Activated naive CD4-positive, alpha-beta T cell treated with anti-CD3 and anti-CD28 coated beads, Interleukin-2, amount 10 ng/mL, durations not matched to agents 7 days and 5 days (primary cell): ENCODE measurements at regions of chr11 and their contacts with region 1.

Region 1: DNA sequence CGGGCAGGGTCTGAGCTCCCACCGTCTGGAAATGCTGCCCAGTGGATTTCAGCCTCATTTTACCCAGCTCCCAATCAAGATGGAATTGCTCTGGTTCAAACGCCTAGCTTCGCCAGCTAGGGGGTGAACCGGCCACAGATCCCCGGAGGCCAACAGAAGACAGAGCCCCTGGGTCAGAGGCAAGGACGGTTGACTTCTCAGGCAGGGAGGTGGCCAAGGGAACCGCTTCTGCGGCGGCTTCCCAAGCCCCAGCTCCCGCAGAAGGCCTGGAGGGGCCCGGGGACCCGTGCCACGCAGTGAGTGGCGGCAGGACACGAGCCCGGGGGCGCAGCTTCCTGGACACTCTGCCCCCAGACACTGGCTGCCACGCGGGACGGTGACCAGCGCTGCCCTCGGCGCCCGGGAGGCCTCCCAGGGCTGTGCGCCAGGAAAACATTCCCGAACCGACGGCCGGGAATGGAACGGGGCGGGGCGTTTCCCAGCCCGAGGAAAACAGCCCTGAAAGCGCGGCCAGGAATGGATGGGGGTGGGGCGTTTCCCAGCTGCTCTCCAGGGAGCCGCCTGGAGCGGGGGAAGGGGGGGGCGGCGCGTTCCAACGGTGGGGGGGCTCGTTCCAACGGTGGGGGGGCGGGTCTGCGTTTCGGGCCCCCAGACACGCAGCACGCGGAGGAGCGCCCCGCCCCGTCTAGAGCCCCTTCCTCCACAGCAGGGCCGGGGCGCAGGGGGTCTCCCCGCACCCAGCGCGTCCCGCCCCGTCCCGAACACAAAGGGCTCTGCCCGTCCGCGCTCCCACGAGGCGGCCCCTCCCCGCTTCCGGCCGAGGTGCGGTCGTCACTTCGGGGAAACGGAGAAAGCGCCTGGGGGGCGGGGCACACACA is 13.5 kb upstream of the B4GALNT4 start:
- DNase-seq: peak; percentile 93
- H3K4me3 Mint-ChIP-seq: peak overlapping the region; percentile 80
- H3K27ac Mint-ChIP-seq: peak overlapping the region; percentile 94
- H3K4me1 Mint-ChIP-seq: peaks cover 41% of the 10 kb centered on the region
- H3K27me3 Mint-ChIP-seq: peaks cover 36% of the 10 kb centered on the region

Region 2: GRCh38 chr11:297586-298405 is 58.0 kb before region 1 on chr11:
- CTCF ChIA-PET with region 1: no interaction called
- DNase-seq: peak; percentile 60
- H3K4me3 Mint-ChIP-seq: no peak overlapping the region
- H3K27ac Mint-ChIP-seq: peak overlapping the region; percentile 33
- H3K4me1 Mint-ChIP-seq: peaks cover 27% of the 10 kb centered on the region
- H3K27me3 Mint-ChIP-seq: peaks cover 36% of the 10 kb centered on the region

Region 3: DNA sequence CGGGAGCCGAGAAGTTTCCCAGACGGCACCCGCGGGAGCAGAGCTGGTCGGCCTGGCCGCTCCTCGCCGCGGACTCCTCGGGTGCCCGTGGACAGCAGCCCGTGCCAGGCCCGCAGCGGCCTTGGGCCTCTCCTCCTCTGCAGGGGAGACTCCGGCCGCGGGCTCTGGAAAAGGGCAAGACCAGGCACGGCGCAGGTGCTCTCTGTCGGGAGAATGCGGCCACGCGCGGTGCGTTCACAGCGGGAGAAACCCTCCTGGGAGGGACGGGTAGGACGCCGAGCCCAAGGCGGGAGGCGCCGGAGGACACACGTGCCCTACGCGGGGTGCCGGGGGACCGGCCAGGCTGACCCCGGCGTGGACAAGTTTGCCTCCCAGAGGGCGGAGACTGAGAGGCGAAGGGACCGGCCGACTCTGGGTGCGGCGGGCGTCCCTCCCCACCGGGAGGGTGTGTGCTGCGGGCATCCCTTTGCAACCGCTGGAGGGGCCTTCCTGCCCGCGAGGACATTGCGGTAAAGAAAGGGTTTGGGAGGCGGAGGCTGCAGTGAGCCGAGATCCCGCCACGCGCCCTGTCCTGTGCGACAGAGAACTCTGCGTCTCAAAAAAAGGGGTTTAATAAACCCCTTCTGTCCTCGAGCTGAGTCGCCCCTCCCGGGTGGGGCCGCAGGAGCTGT is 39.7 kb before region 1 on chr11:
- CTCF ChIA-PET with region 1: interaction called, 15 read pairs
- DNase-seq: peak; percentile 65
- H3K4me3 Mint-ChIP-seq: peak overlapping the region; percentile 83
- H3K27ac Mint-ChIP-seq: peak overlapping the region; percentile 97
- H3K4me1 Mint-ChIP-seq: peaks cover 40% of the 10 kb centered on the region
- H3K27me3 Mint-ChIP-seq: peaks cover 12% of the 10 kb centered on the region

Region 4: DNA sequence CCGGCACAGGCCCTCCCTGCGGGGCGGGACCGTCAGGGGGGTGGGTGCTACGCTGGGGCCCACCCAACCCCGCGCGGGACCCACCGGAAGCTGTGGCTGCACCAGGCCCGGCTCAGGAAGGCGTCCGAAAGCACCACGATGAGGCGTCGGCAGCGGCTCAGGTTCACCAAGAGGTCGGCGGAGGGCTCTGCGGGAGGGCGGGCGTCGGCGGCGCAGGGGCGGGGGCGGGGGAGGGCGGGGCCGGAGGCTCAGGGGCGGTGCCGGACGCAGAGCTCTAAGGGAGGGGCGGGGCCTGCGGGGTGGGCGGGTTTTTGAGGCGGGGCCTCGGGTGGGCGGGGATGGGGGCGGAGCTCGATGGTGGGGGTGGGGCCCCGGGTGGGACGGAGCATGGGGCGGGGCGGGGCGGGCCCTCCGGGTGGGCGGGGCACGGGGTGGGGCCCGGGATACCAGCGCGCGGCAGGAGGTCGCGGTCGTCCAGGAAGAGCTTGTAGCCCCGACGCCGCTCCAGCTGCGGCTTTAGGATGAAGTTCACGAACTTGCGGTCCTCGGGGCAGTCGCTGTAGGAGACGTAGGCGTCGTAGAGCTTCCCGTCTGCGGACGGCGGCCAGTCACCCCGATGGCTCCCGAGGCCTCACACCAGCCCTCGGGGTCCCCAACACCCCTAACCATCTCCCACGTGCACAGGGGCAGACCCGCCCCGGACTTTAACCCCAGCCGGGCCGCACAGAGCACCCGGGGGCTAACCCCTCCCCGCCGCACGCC is 51.3 kb after region 1 on chr11:
- CTCF ChIA-PET with region 1: no interaction called
- DNase-seq: peak; percentile 95
- H3K4me3 Mint-ChIP-seq: peak overlapping the region; percentile 15
- H3K27ac Mint-ChIP-seq: peak overlapping the region; percentile 73
- H3K4me1 Mint-ChIP-seq: peaks cover 12% of the 10 kb centered on the region
- H3K27me3 Mint-ChIP-seq: no peaks in the 10 kb centered on the region